T-cell (primary cell): ENCODE measurements at regions of chr15 and their contacts with region 1.

Region 1: DNA sequence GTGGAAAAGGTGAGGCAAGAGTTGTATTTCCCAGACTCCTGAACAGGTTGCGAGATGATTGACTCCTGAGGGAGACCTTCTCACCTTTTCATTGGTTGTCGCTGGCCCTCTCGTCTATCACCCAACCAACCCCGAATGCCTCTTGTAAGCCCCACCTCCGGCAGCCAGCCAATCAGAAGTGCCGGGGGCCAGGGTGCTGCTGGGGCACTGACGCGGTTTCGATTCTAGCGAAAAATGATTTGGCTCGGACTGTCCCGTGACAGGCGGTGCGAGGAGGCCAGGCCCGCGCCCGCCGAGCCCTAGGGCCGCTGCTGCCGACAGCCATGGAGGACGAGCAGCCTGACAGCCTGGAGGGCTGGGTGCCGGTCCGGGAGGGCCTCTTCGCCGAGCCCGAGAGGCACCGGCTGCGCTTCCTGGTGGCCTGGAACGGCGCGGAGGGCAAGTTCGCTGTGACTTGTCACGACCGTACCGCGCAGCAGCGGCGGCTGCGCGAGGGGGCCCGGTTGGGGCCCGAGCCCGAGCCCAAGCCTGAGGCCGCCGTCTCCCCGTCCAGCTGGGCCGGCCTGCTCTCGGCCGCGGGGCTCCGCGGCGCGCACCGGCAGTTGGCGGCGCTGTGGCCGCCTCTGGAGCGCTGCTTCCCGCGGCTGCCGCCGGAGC is at the start of gene WHAMM:
- DNase-seq: peak; percentile 86 to 98 (median 95)
- ATAC-seq: peak; percentile 92 to 94 (median 92)
- H3K4me3 ChIP-seq: peak within 1 kb of the TSS; percentile 71 to 82
- H3K4me3 Mint-ChIP-seq: peak within 1 kb of the TSS; percentile 90 to 95 (median 91)
- H3K27ac ChIP-seq: peak within 1 kb of the TSS; percentile 97
- H3K27ac Mint-ChIP-seq: peak within 1 kb of the TSS; percentile 92 to 97
- H3K4me1 ChIP-seq: peaks cover 12 to 24% of the 10 kb centered on the region in 2 experiments
- H3K4me1 Mint-ChIP-seq: peaks cover 36 to 42% (median 37%) of the 10 kb centered on the region in 3 donors
- H3K27me3 ChIP-seq: no peaks in the 10 kb centered on the region
- H3K27me3 Mint-ChIP-seq: no peaks in the 10 kb centered on the region
- total RNA-seq, gene WHAMM: 28.1 to 60.8 (median 34.1) TPM

Region 2: GRCh38 chr15:82749951-82750830 is 59.3 kb before region 1 on chr15:
- CTCF ChIA-PET with region 1: interaction called in 1 of 2 experiments, 13 read pairs
- POLR2A ChIA-PET with region 1: interaction called, 5 to 12 read pairs
- DNase-seq: peak; percentile 60 to 88 (median 75)
- ATAC-seq: peak; percentile 97 to 99 (median 98)
- H3K4me3 ChIP-seq: peak overlapping the region; percentile 65 to 96
- H3K4me3 Mint-ChIP-seq: peak overlapping the region; percentile 93 to 99 (median 99)
- H3K27ac ChIP-seq: peak overlapping the region; percentile 75
- H3K27ac Mint-ChIP-seq: peak overlapping the region; percentile 92 to 95
- H3K4me1 ChIP-seq: peaks cover 17 to 19% of the 10 kb centered on the region in 2 experiments
- H3K4me1 Mint-ChIP-seq: peaks cover 54 to 60% (median 59%) of the 10 kb centered on the region in 3 donors
- H3K27me3 ChIP-seq: no peaks in the 10 kb centered on the region
- H3K27me3 Mint-ChIP-seq: no peaks in the 10 kb centered on the region

Region 3: GRCh38 chr15:82774496-82774895 is 35.0 kb before region 1 on chr15:
- CTCF ChIA-PET with region 1: interaction called in 1 of 2 experiments, 12 read pairs
- POLR2A ChIA-PET with region 1: no interaction called
- DNase-seq: no peak
- ATAC-seq: no peak
- H3K4me3 ChIP-seq: no peak overlapping the region
- H3K4me3 Mint-ChIP-seq: no peak overlapping the region
- H3K27ac ChIP-seq: no peak overlapping the region
- H3K27ac Mint-ChIP-seq: no peak overlapping the region
- H3K4me1 ChIP-seq: no peaks in the 10 kb centered on the region
- H3K4me1 Mint-ChIP-seq: no peaks in the 10 kb centered on the region
- H3K27me3 ChIP-seq: peaks cover 0 to 6% of the 10 kb centered on the region in 2 experiments
- H3K27me3 Mint-ChIP-seq: no peaks in the 10 kb centered on the region

Region 4: DNA sequence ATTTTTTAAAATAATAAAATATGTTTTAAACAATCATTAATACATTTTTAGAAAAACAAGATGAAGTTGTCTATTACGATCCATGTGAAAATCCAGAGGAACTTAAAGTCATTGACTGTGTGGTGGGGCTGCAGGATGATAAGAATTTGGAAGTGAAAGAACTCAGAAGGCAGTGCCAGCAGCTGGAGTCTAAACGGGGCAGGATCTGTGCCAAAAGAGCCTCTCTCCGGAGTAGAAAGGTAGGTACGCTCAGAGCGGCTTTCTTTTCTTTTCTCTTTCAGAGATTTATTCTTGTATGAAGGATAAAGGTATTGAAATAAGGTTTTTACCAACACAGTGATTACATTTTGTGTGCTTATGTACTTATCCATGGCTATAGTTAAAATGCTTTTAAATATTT is 13.5 kb after region 1 on chr15:
- CTCF ChIA-PET with region 1: no interaction called
- POLR2A ChIA-PET with region 1: interaction called, 4 to 10 read pairs
- DNase-seq: no peak
- ATAC-seq: no peak
- H3K4me3 ChIP-seq: no peak overlapping the region
- H3K4me3 Mint-ChIP-seq: no peak overlapping the region
- H3K27ac ChIP-seq: no peak overlapping the region
- H3K27ac Mint-ChIP-seq: no peak overlapping the region
- H3K4me1 ChIP-seq: no peaks in the 10 kb centered on the region
- H3K4me1 Mint-ChIP-seq: peaks cover 8 to 13% (median 8%) of the 10 kb centered on the region in 3 donors
- H3K27me3 ChIP-seq: no peaks in the 10 kb centered on the region
- H3K27me3 Mint-ChIP-seq: no peaks in the 10 kb centered on the region

Region 5: DNA sequence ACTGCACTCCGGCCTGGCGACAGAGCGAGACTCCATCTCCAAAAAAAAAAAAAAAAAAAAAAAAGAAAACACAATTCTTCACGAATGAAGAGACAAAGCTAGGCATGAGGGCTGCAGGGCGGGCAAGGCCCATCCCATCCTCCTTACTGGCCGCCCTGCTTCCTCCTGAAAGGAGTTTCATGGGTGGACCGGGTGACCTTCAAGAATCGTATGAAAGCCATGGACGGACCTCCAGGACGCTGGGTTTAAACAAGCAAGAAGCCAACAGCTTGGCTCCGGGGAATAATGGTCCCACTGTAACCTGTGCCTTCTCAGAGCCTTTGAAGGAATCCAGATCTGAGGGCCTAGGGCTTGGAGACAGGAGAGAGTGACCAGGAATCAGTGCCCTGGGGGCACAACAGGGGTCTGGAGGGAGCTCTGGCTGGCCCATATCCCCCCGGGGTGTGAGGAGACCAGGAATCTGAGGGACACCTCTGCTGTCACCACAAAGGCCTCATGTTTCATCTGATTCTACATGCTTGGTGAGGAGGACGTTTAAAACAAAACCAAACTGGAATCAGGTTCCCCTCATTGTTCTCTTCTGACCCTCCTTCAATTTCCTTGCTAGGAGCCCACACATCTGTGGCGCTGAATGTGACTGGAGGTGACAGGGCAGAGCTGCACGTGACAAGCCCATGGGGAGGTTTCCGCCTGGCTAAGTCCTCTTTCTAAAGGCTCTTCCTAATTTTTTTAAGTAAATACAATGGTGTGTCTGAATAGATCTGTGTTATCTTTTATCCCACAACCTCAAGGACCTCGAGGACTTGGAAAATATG is 46.0 kb after region 1 on chr15:
- CTCF ChIA-PET with region 1: no interaction called
- POLR2A ChIA-PET with region 1: interaction called, 4 to 12 read pairs
- DNase-seq: no peak
- ATAC-seq: no peak
- H3K4me3 ChIP-seq: no peak overlapping the region
- H3K4me3 Mint-ChIP-seq: peak overlapping the region in 1 of 3 donors; percentile 8
- H3K27ac ChIP-seq: no peak overlapping the region
- H3K27ac Mint-ChIP-seq: no peak overlapping the region
- H3K4me1 ChIP-seq: peaks cover 0 to 10% of the 10 kb centered on the region in 2 experiments
- H3K4me1 Mint-ChIP-seq: peaks cover 7 to 12% (median 11%) of the 10 kb centered on the region in 3 donors
- H3K27me3 ChIP-seq: no peaks in the 10 kb centered on the region
- H3K27me3 Mint-ChIP-seq: no peaks in the 10 kb centered on the region

Region 6: GRCh38 chr15:83685916-83686332 is 876.4 kb after region 1 on chr15:
- CTCF ChIA-PET with region 1: no interaction called
- POLR2A ChIA-PET with region 1: no interaction called
- DNase-seq: no peak
- ATAC-seq: no peak
- H3K4me3 ChIP-seq: no peak overlapping the region
- H3K4me3 Mint-ChIP-seq: no peak overlapping the region
- H3K27ac ChIP-seq: no peak overlapping the region
- H3K27ac Mint-ChIP-seq: no peak overlapping the region
- H3K4me1 ChIP-seq: no peaks in the 10 kb centered on the region
- H3K4me1 Mint-ChIP-seq: no peaks in the 10 kb centered on the region
- H3K27me3 ChIP-seq: no peaks in the 10 kb centered on the region
- H3K27me3 Mint-ChIP-seq: peaks cover 7 to 24% of the 10 kb centered on the region in 2 donors